HEK293 (cell line): ENCODE measurements at regions of chr15 and their contacts with region 1.

Region 1: GRCh38 chr15:29925227-29926082 is 103.2 kb upstream of the TJP1 start:
- H3K4me3 ChIP-seq: no peak overlapping the region
- H3K27ac ChIP-seq: 0 out of 2 replicates have a peak overlapping the region, but pooled peaks have one; percentile 16
- H3K4me1 ChIP-seq: peaks cover 13% of the 10 kb centered on the region; the same call in 1 of the 2 replicates
- CTCF ChIP-seq: peak; percentile 92

Region 2: DNA sequence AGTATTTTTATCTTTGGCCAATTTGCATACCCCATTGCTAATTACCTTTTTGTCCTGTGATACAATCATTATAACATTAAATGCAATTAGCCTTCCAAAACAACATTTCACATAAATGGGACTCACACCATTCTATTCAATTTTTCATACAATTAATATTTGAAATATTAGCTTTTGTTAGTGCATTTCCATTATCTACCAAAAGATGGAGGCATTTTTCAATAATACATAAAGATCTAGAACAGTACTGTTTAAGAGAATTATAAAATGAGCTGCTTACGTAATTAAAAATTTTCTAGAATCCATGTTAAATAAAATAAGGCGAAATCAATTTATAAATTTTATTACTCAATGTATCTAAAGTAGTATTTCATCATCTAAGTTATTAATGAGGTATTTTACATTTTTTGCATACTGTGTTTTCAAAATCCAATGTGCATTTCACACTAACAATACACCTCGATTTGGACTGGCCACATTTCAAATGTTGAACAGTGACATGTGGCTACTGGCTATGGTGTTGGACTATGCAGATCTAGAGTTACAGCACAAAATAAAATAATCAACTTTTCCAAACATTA is 177.5 kb before region 1 on chr15:
- CTCF ChIA-PET with region 1: interaction called, 25 read pairs
- POLR2A ChIA-PET with region 1: interaction called, 6 read pairs
- H3K4me3 ChIP-seq: no peak overlapping the region
- H3K27ac ChIP-seq: no peak overlapping the region
- H3K4me1 ChIP-seq: no peaks in the 10 kb centered on the region
- CTCF ChIP-seq: no peak

Region 3: GRCh38 chr15:29821416-29822131 is 103.9 kb before region 1 on chr15:
- CTCF ChIA-PET with region 1: interaction called, 26 read pairs
- POLR2A ChIA-PET with region 1: interaction called, 18 read pairs
- H3K4me3 ChIP-seq: peak overlapping the region; percentile 80
- H3K27ac ChIP-seq: peak overlapping the region; percentile 93
- H3K4me1 ChIP-seq: peaks cover 7% of the 10 kb centered on the region
- CTCF ChIP-seq: no peak

Region 4: DNA sequence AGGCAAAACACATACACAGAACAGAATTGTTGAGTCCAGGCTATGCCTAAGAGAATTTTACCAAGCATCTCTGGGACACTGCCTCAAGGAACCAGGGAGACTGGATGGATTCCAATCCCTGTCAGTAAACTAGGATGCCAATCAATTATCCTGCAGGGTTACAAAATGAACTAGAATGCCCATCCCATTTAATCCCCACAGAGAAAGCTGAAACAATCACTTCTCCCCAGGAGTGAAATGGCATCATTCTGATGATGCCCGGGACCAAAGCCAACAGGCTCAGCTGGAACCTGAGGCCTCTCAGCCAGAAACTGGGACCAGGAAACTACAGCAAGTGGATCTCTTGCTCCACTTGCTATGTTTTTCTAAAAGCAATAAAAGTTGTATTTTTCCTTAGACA is 26.8 kb after region 1 on chr15:
- CTCF ChIA-PET with region 1: interaction called, 14 read pairs
- POLR2A ChIA-PET with region 1: no interaction called
- H3K4me3 ChIP-seq: no peak overlapping the region
- H3K27ac ChIP-seq: no peak overlapping the region
- H3K4me1 ChIP-seq: peaks cover 6% of the 10 kb centered on the region; the same call in 1 of the 2 replicates
- CTCF ChIP-seq: no peak